Ovary (tissue), 10 donors: ENCODE measurements at regions of chr7 and their contacts with region 1.

Region 1: DNA sequence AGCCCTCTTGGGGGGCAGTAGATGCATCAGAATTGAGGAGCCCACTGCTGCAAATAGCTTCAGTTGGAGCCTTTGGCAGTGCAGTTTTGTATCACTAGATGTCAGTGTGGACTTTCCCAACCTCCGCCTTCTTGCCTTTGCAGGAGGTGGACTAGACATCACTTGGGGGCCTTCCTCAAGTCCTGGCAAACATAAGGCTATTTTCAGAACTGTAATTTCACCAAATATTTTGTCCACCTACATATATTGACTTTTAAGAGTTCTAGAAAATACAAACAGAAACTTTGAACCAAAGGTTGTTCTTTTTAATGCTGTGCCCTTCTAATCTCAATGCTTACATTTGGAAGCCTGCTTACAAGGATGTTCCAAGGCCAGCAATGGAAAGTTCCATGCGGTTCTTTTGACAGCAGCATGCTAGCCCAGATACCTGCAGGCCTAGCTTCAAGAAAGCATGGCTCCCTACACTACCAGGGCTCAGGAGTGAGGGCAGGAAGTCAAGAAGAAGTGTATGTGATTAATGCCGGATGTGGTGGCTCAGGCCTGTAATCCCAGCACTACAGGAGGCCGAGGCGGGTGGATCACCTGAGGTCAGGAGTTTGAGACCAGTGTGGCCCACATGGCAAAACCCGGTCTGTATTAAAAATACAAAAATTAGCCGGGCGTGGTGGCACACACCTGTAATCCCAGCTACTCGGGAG is 8.0 kb upstream of the ZNRF2 start:
- DNase-seq: peak; percentile 23 to 51 (median 41)
- H3K4me3 ChIP-seq: no peak overlapping the region
- H3K27ac ChIP-seq: no peak overlapping the region
- H3K4me1 ChIP-seq: no peaks in the 10 kb centered on the region
- H3K27me3 ChIP-seq: no peaks in the 10 kb centered on the region
- CTCF ChIP-seq: peak; percentile 44 to 57 (median 49)
- EP300 ChIP-seq: no peak
- POLR2A ChIP-seq: no peak

Region 2: GRCh38 chr7:30348083-30348560 is 71.8 kb after region 1 on chr7:
- intact Hi-C with region 1: no loop called
- DNase-seq: no peak
- H3K4me3 ChIP-seq: no peak overlapping the region
- H3K27ac ChIP-seq: no peak overlapping the region
- H3K4me1 ChIP-seq: no peaks in the 10 kb centered on the region
- H3K27me3 ChIP-seq: no peaks in the 10 kb centered on the region
- CTCF ChIP-seq: no peak
- EP300 ChIP-seq: no peak
- POLR2A ChIP-seq: no peak

Region 3: DNA sequence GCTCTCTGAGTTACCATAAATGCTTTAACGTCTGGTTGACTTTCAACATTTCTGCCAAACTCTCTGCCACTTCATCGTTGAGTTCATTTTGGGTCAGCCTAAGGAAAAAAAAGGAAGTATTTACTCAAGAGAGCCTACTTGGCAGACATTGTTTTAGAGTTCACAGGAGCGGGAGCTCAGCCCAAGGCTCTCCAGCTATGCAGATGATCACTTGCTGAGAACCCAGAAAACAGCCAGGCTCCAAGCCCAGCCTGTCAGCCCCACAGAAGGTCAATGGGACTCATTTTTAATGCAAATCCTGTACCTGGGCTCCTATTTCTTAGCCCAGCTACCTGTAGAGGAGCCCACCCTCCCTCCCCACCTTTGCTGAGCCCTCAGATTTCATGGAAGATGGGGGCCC is 156.7 kb after region 1 on chr7:
- intact Hi-C with region 1: loop called in 1 of 4 experiments (anchors 10 kb)
- DNase-seq: peak in 4 of 5 donors; percentile 37 to 62 (median 56)
- H3K4me3 ChIP-seq: no peak overlapping the region
- H3K27ac ChIP-seq: no peak overlapping the region
- H3K4me1 ChIP-seq: peaks cover 3% of the 10 kb centered on the region
- H3K27me3 ChIP-seq: no peaks in the 10 kb centered on the region
- CTCF ChIP-seq: no peak
- EP300 ChIP-seq: no peak
- POLR2A ChIP-seq: no peak

Region 4: GRCh38 chr7:30564243-30564892 is 288.0 kb after region 1 on chr7:
- intact Hi-C with region 1: loop called (anchors 5 kb)
- DNase-seq: peak; percentile 74 to 88 (median 86)
- H3K4me3 ChIP-seq: no peak overlapping the region
- H3K27ac ChIP-seq: no peak overlapping the region
- H3K4me1 ChIP-seq: no peaks in the 10 kb centered on the region
- H3K27me3 ChIP-seq: no peaks in the 10 kb centered on the region
- CTCF ChIP-seq: peak; percentile 68 to 83 (median 78)
- EP300 ChIP-seq: no peak
- POLR2A ChIP-seq: no peak

Region 5: DNA sequence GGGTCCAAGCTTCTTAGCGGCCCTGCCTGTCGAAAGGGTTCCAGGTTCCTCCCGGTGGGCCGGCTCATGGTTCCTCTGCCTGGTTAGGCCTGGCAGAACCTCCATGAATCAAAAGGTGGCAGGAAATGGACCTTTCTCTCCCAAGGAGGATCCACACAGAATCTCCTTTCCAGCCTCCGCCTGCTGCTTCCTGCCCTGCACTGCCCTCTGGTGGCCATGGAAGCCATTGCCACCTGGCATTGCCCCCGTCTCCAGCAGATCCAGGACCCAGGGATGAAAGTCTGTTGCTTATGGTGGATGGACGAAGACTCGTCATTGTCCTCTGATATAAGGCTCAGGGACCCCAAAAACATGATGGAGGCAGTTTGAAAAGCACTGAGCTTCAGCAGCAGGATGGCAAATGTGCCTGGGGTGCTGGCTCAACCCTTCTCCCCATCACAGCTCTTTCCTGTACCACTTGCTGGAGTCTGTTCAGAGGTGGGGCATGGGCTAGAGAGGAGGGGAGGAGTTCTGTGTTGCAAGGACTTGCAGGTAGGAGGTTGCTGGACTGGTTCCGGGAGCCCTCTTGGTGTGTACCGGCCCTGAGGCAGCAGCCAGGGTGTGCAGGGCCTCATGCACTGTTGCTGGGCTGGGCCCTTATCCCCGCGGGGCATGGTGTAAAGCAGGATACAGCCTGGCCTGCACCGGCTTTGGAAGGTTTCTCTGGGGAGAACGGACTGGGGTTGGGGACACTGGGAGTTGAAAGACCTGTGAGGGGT is 464.3 kb after region 1 on chr7:
- intact Hi-C with region 1: loop called in 1 of 4 experiments (anchors 5 kb)
- DNase-seq: peak; percentile 69 to 89 (median 83)
- H3K4me3 ChIP-seq: no peak overlapping the region
- H3K27ac ChIP-seq: no peak overlapping the region
- H3K4me1 ChIP-seq: no peaks in the 10 kb centered on the region
- H3K27me3 ChIP-seq: no peaks in the 10 kb centered on the region
- CTCF ChIP-seq: peak; percentile 85 to 93 (median 91)
- EP300 ChIP-seq: no peak
- POLR2A ChIP-seq: no peak